ENCODE measurements at regions of chr15 and their contacts with region 1.

Region 1: DNA sequence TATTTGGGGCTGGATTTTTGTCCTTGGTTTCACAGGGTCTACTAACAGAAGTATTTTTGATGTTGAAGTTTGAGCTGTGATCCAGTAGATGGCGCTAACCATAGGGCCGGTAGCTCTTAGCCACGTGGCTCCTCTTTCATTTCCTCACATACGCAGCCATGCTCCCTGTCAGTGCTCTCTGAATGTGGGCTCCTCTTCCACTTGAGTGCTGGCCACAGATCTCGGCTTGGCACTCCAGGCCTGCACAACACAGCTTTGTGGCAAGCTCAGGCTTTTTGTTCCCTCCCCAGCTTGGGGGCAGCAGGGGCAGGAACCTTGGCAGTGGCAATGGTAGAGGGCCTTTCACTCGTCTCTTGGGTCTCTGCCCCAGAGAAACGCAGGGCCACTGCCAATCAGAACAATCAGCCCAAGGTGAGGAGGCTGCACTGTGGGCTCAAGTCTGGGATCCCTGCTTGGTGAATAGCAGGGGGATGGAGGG is 18.6 kb upstream of the DNAAF4 start:
- DNase-seq: peak; percentile 40
- ATAC-seq: peak; percentile 74
- H3K4me3 Mint-ChIP-seq: no peak overlapping the region
- H3K27ac Mint-ChIP-seq: no peak overlapping the region
- H3K4me1 Mint-ChIP-seq: no peaks in the 10 kb centered on the region
- H3K27me3 Mint-ChIP-seq: peaks cover 29% of the 10 kb centered on the region

Region 2: DNA sequence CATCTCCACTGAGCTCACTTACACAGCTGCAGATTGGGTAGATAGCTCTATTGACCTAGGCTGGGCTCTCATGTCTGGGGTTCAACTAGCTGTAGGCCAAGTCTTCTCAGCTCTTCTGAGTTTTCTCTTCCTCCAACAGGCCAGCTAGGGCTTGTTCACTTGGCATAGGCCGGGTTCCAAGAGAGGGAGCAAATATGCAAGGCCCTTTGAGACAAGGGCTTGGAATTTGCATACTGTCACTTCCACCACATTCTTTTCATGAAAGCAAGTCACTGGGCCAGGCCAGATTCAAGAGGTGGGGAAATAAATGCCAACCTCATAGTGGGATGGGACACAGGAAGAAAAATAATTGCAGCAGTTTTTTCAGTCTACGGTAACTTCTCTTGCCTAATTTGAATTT is 182.4 kb before region 1 on chr15:
- CTCF ChIA-PET with region 1: no interaction called
- POLR2A ChIA-PET with region 1: no interaction called
- intact Hi-C with region 1: no loop called
- DNase-seq: no peak
- ATAC-seq: no peak
- H3K4me3 Mint-ChIP-seq: no peak overlapping the region
- H3K27ac Mint-ChIP-seq: peak overlapping the region; percentile 10
- H3K4me1 Mint-ChIP-seq: no peaks in the 10 kb centered on the region
- H3K27me3 Mint-ChIP-seq: no peaks in the 10 kb centered on the region

Region 3: GRCh38 chr15:55514414-55514850 is 12.2 kb before region 1 on chr15:
- CTCF ChIA-PET with region 1: interaction called, 19 read pairs
- POLR2A ChIA-PET with region 1: no interaction called
- intact Hi-C with region 1: no loop called
- DNase-seq: no peak
- ATAC-seq: no peak
- H3K4me3 Mint-ChIP-seq: no peak overlapping the region
- H3K27ac Mint-ChIP-seq: no peak overlapping the region
- H3K4me1 Mint-ChIP-seq: no peaks in the 10 kb centered on the region
- H3K27me3 Mint-ChIP-seq: no peaks in the 10 kb centered on the region

Region 4: GRCh38 chr15:55637086-55637485 is 110.5 kb after region 1 on chr15:
- CTCF ChIA-PET with region 1: interaction called, 8 read pairs
- POLR2A ChIA-PET with region 1: no interaction called
- intact Hi-C with region 1: loop called in 1 of 2 experiments (anchors 1 kb)
- DNase-seq: no peak
- ATAC-seq: no peak
- H3K4me3 Mint-ChIP-seq: no peak overlapping the region
- H3K27ac Mint-ChIP-seq: no peak overlapping the region
- H3K4me1 Mint-ChIP-seq: no peaks in the 10 kb centered on the region
- H3K27me3 Mint-ChIP-seq: peaks cover 3% of the 10 kb centered on the region